ENCODE measurements at regions of chr17 and their contacts with region 1.

Region 1: GRCh38 chr17:10384175-10384574 is 11.4 kb upstream of the MYH13 start:
- DNase-seq: no peak
- H3K4me3 ChIP-seq: no peak overlapping the region
- H3K27ac ChIP-seq: no peak overlapping the region
- H3K4me1 ChIP-seq: no peaks in the 10 kb centered on the region
- H3K27me3 ChIP-seq: no peaks in the 10 kb centered on the region
- CTCF ChIP-seq: no peak
- POLR2A ChIP-seq: no peak

Region 2: GRCh38 chr17:10349403-10349802 is 34.8 kb before region 1 on chr17:
- intact Hi-C with region 1: no loop called
- DNase-seq: no peak
- H3K4me3 ChIP-seq: no peak overlapping the region
- H3K27ac ChIP-seq: no peak overlapping the region
- H3K4me1 ChIP-seq: no peaks in the 10 kb centered on the region
- H3K27me3 ChIP-seq: no peaks in the 10 kb centered on the region
- CTCF ChIP-seq: peak in 1 of 6 experiments; percentile 31
- POLR2A ChIP-seq: no peak

Region 3: DNA sequence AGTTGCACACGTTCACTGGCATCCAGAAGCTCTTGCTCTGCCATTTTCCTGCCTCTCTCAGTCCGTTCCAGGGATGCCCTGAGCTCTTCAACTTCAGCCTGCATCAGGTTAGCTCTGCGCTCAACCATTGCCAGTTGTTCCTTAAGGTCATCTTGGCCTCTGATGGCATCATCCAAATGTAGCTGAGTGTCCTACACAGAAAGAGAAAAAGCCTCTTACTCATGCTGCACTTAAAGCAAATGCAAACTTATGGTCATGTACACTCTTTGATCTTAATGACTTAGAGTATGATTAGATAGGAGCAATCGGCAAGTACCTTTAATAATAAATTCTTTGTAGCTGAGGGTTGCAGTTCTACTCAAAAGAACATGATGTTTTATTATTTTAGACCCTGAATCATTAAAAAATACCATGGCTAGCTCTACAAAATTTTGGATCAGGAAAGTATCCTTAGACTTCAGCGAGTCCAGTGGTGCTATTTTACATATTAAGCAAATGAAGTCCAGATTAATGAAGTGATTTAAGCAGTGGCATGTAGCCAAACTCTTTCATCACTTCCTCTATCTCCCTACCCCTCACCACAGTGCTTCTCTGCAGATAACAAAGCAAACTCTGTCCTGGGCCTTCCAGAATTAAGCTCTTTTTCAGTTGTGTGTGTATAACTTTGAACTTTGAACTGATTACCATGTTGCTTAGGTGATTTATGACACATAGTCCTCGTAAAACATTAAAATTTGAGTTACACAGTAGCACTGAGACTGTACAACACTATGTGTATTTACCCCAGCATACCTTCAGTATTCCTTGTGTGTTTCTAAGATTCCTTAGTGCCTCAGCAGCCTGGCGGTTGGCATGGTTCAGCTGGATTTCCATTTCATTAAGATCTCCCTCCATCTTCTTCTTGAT is 63.1 kb after region 1 on chr17:
- intact Hi-C with region 1: loop called (anchors 10 kb)
- DNase-seq: no peak
- H3K4me3 ChIP-seq: no peak overlapping the region
- H3K27ac ChIP-seq: no peak overlapping the region
- H3K4me1 ChIP-seq: no peaks in the 10 kb centered on the region
- H3K27me3 ChIP-seq: peaks cover 0 to 4% (median 0%) of the 10 kb centered on the region in 4 donors
- CTCF ChIP-seq: no peak
- POLR2A ChIP-seq: no peak